Activated naive CD8-positive, alpha-beta T cell treated with anti-CD3 and anti-CD28 coated beads, Interleukin-2, amount 10 ng/mL, durations not matched to agents 7 days and 5 days (primary cell): ENCODE measurements at regions of chr1 and their contacts with region 1.

Region 1: DNA sequence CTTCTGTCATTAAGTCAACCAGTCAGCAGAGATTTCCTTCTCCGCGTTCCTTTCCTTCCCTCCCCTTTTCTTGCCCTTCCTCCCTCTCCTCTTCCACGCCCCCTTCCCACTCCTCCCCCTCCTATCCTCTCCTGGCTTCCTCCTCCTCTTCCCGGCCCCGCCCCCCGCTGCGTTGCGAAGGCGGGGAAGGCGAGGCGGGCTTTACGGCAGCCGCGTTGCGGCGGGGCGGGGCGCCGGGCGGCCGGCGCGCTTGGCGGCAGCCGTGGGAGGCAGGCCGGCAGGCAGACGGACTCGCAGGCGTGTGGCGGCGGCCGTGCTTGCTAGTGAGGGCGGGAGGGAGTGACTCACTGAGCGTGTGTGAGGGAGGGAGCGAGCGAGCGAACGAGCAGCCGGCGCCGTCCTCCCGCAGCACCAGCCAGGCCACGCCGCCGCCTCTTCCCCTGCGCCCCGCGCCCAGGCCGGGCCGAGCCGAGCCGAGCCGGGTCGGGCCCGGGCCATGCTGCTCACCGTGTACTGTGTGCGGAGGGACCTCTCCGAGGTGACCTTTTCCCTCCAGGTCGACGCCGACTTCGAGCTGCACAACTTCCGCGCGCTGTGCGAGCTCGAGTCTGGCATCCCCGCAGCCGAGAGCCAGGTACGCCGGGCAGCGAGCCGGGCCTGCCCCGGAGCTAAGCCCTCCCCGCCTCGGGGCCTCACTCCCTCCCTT is at the start of gene DDI2:
- DNase-seq: peak; percentile 97
- ATAC-seq: peak; percentile 91
- H3K4me3 Mint-ChIP-seq: peak within 1 kb of the TSS; percentile 93
- H3K27ac Mint-ChIP-seq: peak within 1 kb of the TSS; percentile 90
- H3K4me1 Mint-ChIP-seq: peaks cover 24% of the 10 kb centered on the region
- H3K27me3 Mint-ChIP-seq: no peaks in the 10 kb centered on the region
- total RNA-seq, gene DDI2: 31.6 to 33.3 TPM

Region 2: GRCh38 chr1:15559294-15559761 is 58.0 kb before region 1 on chr1:
- POLR2A ChIA-PET with region 1: no interaction called
- DNase-seq: no peak
- ATAC-seq: no peak
- H3K4me3 Mint-ChIP-seq: no peak overlapping the region
- H3K27ac Mint-ChIP-seq: no peak overlapping the region
- H3K4me1 Mint-ChIP-seq: peaks cover 2% of the 10 kb centered on the region
- H3K27me3 Mint-ChIP-seq: no peaks in the 10 kb centered on the region

Region 3: GRCh38 chr1:15603050-15603965 is 14.0 kb before region 1 on chr1:
- POLR2A ChIA-PET with region 1: interaction called, 29 read pairs
- DNase-seq: peak; percentile 93
- ATAC-seq: peak; percentile 96
- H3K4me3 Mint-ChIP-seq: peak overlapping the region; percentile 53
- H3K27ac Mint-ChIP-seq: peak overlapping the region; percentile 70
- H3K4me1 Mint-ChIP-seq: peaks cover 9% of the 10 kb centered on the region
- H3K27me3 Mint-ChIP-seq: no peaks in the 10 kb centered on the region